ENCODE measurements at regions of chr1 and their contacts with region 1.

Region 1: DNA sequence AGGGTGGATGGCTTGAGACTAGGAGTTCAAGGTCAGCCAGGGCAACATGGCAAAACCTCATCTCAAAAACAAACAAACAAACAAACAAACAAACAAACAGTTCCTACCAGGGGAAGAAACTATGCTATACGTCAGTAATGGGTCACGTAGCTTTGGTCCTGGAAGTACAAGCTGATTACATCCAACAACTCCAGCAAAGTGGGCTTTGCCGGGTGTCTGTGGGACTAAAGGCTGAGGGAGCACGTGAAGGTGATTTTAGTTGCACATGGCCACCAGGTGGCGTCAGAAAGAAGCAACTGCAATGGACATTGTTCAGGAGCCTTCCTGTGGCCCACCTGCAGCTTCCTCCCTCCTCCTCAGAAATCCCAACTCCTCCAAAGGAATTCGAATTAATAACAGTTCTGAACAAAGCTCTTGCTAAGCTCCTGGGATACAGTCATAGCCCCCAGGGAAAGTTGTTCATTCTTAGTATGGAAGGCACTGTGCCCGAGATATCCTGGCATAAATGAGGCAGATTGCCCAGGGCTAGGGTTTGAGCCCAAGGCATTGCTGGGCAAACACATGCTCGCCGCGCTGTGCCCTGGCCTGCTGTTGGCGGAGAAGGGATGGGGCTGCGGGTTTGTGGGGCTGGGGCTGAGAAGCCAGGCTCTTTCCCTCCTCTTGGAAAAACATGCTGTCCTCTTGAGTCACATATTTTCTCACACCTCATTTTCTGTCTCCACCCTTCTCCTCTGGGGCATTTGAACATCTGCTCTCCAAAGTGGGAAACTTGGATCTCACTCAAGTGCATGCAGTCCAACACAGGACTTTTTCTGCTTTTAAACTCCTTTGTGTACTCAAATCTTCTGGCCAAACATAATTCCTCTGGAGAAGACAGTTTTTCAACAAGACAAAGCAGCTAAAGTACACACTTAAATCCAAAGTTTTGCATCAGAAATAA is 28.6 kb downstream of the AKNAD1 start:
- DNase-seq: no peak
- H3K4me3 ChIP-seq: no peak overlapping the region
- CTCF ChIP-seq: peak; percentile 77

Region 2: GRCh38 chr1:108816049-108816893 is 12.0 kb before region 1 on chr1:
- CTCF ChIA-PET with region 1: interaction called, 46 read pairs
- POLR2A ChIA-PET with region 1: interaction called, 4 read pairs
- DNase-seq: no peak
- H3K4me3 ChIP-seq: peak overlapping the region; percentile 6; the same call in 1 of the 2 replicates
- CTCF ChIP-seq: no peak

Region 3: GRCh38 chr1:108852221-108852975 is 24.1 kb after region 1 on chr1:
- CTCF ChIA-PET with region 1: interaction called, 121 read pairs
- POLR2A ChIA-PET with region 1: no interaction called
- DNase-seq: no peak
- H3K4me3 ChIP-seq: no peak overlapping the region
- CTCF ChIP-seq: no peak

Region 4: GRCh38 chr1:108865038-108865910 is 37.0 kb after region 1 on chr1:
- CTCF ChIA-PET with region 1: interaction called, 17 read pairs
- POLR2A ChIA-PET with region 1: no interaction called
- DNase-seq: no peak
- H3K4me3 ChIP-seq: no peak overlapping the region
- CTCF ChIP-seq: no peak

Region 5: GRCh38 chr1:108871050-108871724 is 42.9 kb after region 1 on chr1:
- CTCF ChIA-PET with region 1: interaction called, 17 read pairs
- POLR2A ChIA-PET with region 1: no interaction called
- DNase-seq: no peak
- H3K4me3 ChIP-seq: no peak overlapping the region
- CTCF ChIP-seq: no peak

Region 6: DNA sequence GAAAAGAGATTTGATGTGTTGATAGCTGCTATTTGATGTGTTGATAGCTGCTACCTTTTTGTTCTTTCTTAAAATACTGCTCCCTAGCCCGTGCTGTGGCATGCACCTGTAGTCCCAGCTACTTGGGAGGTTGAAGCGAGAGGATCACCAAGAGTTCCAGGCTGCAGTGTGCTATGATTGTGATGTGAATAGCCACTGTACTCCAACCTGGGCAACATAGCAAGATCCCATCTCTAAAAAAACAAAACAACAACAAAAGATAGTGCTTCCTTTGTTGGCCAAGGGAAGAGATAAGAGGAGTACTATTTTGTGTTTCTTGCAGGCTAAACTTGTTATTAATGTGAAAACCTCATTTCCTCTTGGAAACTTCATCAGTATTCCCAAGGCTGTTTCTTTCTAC is 54.5 kb after region 1 on chr1:
- CTCF ChIA-PET with region 1: interaction called, 74 read pairs
- POLR2A ChIA-PET with region 1: no interaction called
- DNase-seq: no peak
- H3K4me3 ChIP-seq: no peak overlapping the region
- CTCF ChIP-seq: no peak

Region 7: GRCh38 chr1:108889706-108890384 is 61.6 kb after region 1 on chr1:
- CTCF ChIA-PET with region 1: interaction called, 540 read pairs
- POLR2A ChIA-PET with region 1: interaction called, 3 read pairs
- DNase-seq: no peak
- H3K4me3 ChIP-seq: no peak overlapping the region
- CTCF ChIP-seq: no peak

Region 8: DNA sequence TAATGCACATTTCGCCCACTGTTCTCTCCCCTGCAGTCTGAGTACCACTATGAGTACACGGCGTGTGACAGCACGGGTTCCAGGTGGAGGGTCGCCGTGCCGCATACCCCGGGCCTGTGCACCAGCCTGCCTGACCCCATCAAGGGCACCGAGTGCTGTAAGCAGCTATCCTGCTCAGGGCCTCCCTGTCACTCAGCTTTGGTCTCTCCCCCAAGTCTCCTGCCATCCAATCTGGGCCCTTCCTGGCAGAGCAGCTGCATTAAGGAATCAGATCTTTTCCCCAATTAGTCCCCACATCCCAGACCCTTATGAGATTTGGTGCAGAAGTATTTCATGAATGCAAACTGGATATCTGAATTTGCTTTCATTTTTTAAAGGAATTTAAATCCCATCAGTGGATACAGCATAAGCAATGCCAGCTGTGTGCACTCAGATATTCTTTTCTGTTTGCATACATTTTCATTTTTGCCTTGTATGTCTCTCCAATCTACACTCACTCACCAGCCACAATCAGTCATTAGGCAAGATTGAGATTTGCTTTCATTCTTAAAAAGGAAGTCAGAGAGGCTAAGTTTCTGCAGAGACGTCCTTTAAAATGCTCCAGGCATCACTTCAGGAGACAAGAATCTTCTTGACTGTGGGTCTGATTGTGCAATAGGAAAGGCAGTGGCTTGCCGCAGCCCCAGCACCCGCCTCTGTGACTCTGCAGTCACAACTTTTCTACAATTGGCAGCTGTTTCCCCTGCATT is 333.7 kb after region 1 on chr1:
- CTCF ChIA-PET with region 1: no interaction called
- POLR2A ChIA-PET with region 1: no interaction called
- DNase-seq: peak; percentile 87
- H3K4me3 ChIP-seq: peak overlapping the region; percentile 44
- CTCF ChIP-seq: no peak

Measured in AG04449 (cell line).